ENCODE measurements at regions of chr9 and their contacts with region 1.

Region 1: GRCh38 chr9:120925535-120926396 is 830 bp downstream of the TRAF1 start:
- DNase-seq: peak; percentile 92
- H3K4me3 Mint-ChIP-seq: peak overlapping the region; percentile 93
- H3K27ac Mint-ChIP-seq: peak overlapping the region; percentile 96
- H3K4me1 Mint-ChIP-seq: peaks cover 77% of the 10 kb centered on the region
- H3K27me3 Mint-ChIP-seq: no peaks in the 10 kb centered on the region

Region 2: GRCh38 chr9:120875954-120876841 is 49.6 kb before region 1 on chr9:
- intact Hi-C with region 1: loop called (anchors 1 kb)
- DNase-seq: peak; percentile 96
- H3K4me3 Mint-ChIP-seq: peak overlapping the region; percentile 97
- H3K27ac Mint-ChIP-seq: peak overlapping the region; percentile 97
- H3K4me1 Mint-ChIP-seq: peaks cover 73% of the 10 kb centered on the region
- H3K27me3 Mint-ChIP-seq: no peaks in the 10 kb centered on the region

Region 3: GRCh38 chr9:120909904-120910303 is 15.9 kb before region 1 on chr9:
- intact Hi-C with region 1: loop called (anchors 2 kb)
- DNase-seq: no peak
- H3K4me3 Mint-ChIP-seq: peak overlapping the region; percentile 21
- H3K27ac Mint-ChIP-seq: peak overlapping the region; percentile 87
- H3K4me1 Mint-ChIP-seq: peaks cover 85% of the 10 kb centered on the region
- H3K27me3 Mint-ChIP-seq: no peaks in the 10 kb centered on the region

Region 4: GRCh38 chr9:120998111-120998510 is 72.3 kb after region 1 on chr9:
- intact Hi-C with region 1: no loop called
- DNase-seq: no peak
- H3K4me3 Mint-ChIP-seq: no peak overlapping the region
- H3K27ac Mint-ChIP-seq: no peak overlapping the region
- H3K4me1 Mint-ChIP-seq: no peaks in the 10 kb centered on the region
- H3K27me3 Mint-ChIP-seq: peaks cover 2% of the 10 kb centered on the region

Region 5: DNA sequence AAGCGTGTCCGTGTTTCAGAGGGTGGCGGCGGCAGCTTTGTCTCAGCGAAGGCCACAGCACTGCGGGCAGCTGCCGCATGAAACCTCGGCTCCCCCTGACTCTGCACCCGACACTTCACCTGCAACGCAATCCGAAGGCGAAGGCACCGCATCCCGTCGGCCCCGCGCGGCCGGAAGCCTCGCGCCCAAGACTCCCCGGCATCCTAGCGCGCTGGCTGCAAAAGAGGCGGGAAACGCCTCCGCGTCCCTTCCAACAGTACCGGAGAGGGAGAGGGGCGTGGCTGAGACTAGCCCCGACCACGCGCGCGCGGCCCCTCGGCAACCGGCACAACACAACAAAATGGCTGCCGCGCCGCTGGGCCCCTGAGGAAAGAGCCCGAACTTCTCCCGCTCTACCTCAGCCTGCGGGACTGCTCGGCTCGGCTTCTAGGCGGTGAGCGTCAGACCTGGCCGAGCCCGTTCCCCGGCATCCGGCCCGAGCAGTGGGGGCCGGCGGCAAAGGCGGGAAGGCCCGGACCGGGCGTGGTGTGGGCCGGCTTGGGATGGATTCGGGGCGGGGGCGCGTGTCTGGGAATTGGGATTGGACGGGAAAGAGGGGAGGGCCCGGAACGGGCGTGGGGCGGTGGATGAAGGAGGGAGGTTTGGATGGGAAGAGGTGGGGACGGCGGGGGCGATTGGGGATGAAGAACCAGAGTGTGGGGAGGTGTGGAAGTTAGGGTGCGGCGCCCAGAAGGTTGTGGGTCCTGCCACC is 149.0 kb after region 1 on chr9 and contains the start of gene CNTRL:
- intact Hi-C with region 1: loop called (anchors 2 kb)
- DNase-seq: peak; percentile 97
- H3K4me3 Mint-ChIP-seq: peak within 1 kb of the TSS; percentile 100
- H3K27ac Mint-ChIP-seq: peak within 1 kb of the TSS; percentile 98
- H3K4me1 Mint-ChIP-seq: peaks cover 52% of the 10 kb centered on the region
- H3K27me3 Mint-ChIP-seq: no peaks in the 10 kb centered on the region
- total RNA-seq, gene CNTRL: 68.3 and 69.4 TPM in 2 replicates

Region 6: GRCh38 chr9:121201738-121202533 is 276.2 kb after region 1 on chr9 and contains the start of gene RAB14:
- intact Hi-C with region 1: loop called (anchors 2 kb)
- DNase-seq: peak; percentile 100
- H3K4me3 Mint-ChIP-seq: peak within 1 kb of the TSS; percentile 94
- H3K27ac Mint-ChIP-seq: peak within 1 kb of the TSS; percentile 91
- H3K4me1 Mint-ChIP-seq: peaks cover 40% of the 10 kb centered on the region
- H3K27me3 Mint-ChIP-seq: peaks cover 3% of the 10 kb centered on the region
- total RNA-seq, gene RAB14: 61.4 and 65.1 TPM in 2 replicates